Left lung (tissue), 14 donors: ENCODE measurements at regions of chr3 and their contacts with region 1.

Region 1: GRCh38 chr3:32143849-32144757 is 37.7 kb downstream of the GPD1L start:
- DNase-seq: peak in 2 of 4 donors; percentile 77 to 84
- ATAC-seq: peak; percentile 94
- H3K4me3 ChIP-seq: no peak overlapping the region
- H3K27ac ChIP-seq: no peak overlapping the region
- H3K4me1 ChIP-seq: peaks cover 4 to 34% of the 10 kb centered on the region in 2 donors
- H3K27me3 ChIP-seq: no peaks in the 10 kb centered on the region
- CTCF ChIP-seq: peak; percentile 63 to 82

Region 2: DNA sequence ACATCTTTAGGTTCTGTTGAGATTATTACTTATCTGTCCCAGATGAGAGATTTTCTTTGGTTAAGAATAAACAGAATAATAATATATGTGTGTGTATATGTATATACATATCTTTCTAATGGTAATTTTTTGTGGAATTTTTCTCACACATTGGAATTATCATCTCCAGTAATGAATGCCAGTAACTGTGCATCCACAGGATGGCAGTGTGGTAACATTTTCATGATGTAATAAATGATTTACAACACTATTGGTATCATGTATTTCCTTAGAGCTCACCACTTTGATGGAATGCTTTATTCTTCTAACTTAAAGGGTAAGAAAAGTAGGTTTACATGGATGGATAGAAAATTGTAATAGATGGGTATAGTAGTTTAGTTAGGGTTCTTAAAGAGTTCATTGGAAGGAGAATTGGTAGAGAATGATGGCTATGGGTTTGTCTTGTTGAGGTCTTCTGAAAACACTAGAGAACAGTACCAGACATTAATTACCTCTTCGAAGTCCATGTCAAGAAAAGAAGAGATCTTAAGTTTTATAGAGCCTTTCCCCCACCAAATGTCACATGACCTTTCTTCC is 533.3 kb before region 1 on chr3:
- intact Hi-C with region 1: loop called in 1 of 2 experiments (anchors 5 kb)
- DNase-seq: peak in 2 of 4 donors; percentile 25 to 42
- ATAC-seq: peak; percentile 83
- H3K4me3 ChIP-seq: no peak overlapping the region
- H3K27ac ChIP-seq: no peak overlapping the region
- H3K4me1 ChIP-seq: peaks cover 0 to 24% of the 10 kb centered on the region in 2 donors
- H3K27me3 ChIP-seq: no peaks in the 10 kb centered on the region
- CTCF ChIP-seq: peak; percentile 33 to 45

Region 3: DNA sequence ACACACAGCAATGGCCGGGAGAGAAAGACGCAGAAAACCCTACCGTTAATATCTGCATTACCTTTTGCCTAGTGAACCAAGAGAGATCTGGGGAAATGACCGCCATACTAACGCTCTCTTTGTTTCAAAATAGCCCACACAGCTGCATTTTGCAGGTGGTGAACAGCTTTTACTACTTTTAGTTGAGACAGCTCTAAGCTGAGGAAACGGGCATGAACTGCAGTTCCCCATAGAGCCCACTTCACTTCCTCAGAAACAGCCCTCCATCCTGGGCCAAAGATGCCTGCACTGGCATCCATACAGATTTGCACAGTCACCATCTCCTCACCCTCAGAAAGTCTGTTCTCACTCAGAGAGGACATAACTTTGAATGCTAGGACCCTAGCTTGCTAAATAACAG is 117.5 kb before region 1 on chr3:
- intact Hi-C with region 1: loop called (anchors 5 to 10 kb)
- DNase-seq: no peak
- ATAC-seq: no peak
- H3K4me3 ChIP-seq: no peak overlapping the region
- H3K27ac ChIP-seq: no peak overlapping the region
- H3K4me1 ChIP-seq: no peaks in the 10 kb centered on the region
- H3K27me3 ChIP-seq: no peaks in the 10 kb centered on the region
- CTCF ChIP-seq: no peak